ENCODE measurements at regions of chr7 and their contacts with region 1.

Region 1: DNA sequence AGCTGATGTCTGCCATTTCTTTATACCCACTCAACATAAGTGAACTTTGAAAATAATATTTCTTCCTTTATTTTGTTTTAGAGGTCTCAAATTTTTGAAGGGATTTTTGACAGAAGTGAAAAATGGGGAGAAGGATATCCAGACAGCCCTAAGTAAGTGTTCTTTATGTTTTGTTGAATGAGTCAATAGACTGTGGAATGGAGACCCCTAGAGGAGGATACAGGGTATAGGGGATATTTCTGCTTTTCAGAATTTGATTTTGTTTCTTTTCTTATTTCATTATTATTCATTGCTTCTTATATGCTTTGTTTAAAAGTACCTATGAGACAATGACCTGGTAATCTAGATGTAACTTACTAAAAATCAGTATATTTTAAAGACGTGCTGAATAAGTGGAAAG is 34.4 kb downstream of the PLEKHA8 start:
- DNase-seq: peak; percentile 46 to 51
- ATAC-seq: peak; percentile 86 to 93; a peak in 5 of 6 replicates
- H3K4me3 ChIP-seq: no peak overlapping the region
- H3K27ac ChIP-seq: no peak overlapping the region
- H3K4me1 ChIP-seq: no peaks in the 10 kb centered on the region
- CTCF ChIP-seq: peak; percentile 79
- EP300 ChIP-seq: no peak
- POLR2A ChIP-seq: no peak
- RAD21 ChIP-seq: peak; percentile 70 to 83; a peak in 4 of 5 replicates

Region 2: GRCh38 chr7:29748286-29749108 is 314.1 kb before region 1 on chr7:
- CTCF ChIA-PET with region 1: interaction called, 10 read pairs
- POLR2A ChIA-PET with region 1: no interaction called
- DNase-seq: peak; percentile 13 to 65
- ATAC-seq: peak; percentile 87 to 91
- H3K4me3 ChIP-seq: no peak overlapping the region
- H3K27ac ChIP-seq: no peak overlapping the region
- H3K4me1 ChIP-seq: no peaks in the 10 kb centered on the region
- CTCF ChIP-seq: peak; percentile 76
- EP300 ChIP-seq: no peak
- POLR2A ChIP-seq: no peak
- RAD21 ChIP-seq: peak; percentile 73

Region 3: GRCh38 chr7:29878081-29878688 is 184.4 kb before region 1 on chr7:
- CTCF ChIA-PET with region 1: interaction called, 14 read pairs
- POLR2A ChIA-PET with region 1: no interaction called
- DNase-seq: peak; percentile 39 to 46
- ATAC-seq: peak; percentile 52 to 83; a peak in 3 of 6 replicates
- H3K4me3 ChIP-seq: no peak overlapping the region
- H3K27ac ChIP-seq: no peak overlapping the region
- H3K4me1 ChIP-seq: no peaks in the 10 kb centered on the region
- CTCF ChIP-seq: peak; percentile 77
- EP300 ChIP-seq: no peak
- POLR2A ChIP-seq: no peak
- RAD21 ChIP-seq: peak; percentile 73 to 81

Region 4: GRCh38 chr7:30032310-30033130 is 30.1 kb before region 1 on chr7:
- CTCF ChIA-PET with region 1: interaction called, 15 read pairs
- POLR2A ChIA-PET with region 1: no interaction called
- DNase-seq: no peak
- ATAC-seq: no peak
- H3K4me3 ChIP-seq: no peak overlapping the region
- H3K27ac ChIP-seq: no peak overlapping the region
- H3K4me1 ChIP-seq: peaks cover 12% of the 10 kb centered on the region; the same call in 2 of the 3 replicates
- CTCF ChIP-seq: no peak
- EP300 ChIP-seq: no peak
- POLR2A ChIP-seq: no peak
- RAD21 ChIP-seq: no peak

Region 5: DNA sequence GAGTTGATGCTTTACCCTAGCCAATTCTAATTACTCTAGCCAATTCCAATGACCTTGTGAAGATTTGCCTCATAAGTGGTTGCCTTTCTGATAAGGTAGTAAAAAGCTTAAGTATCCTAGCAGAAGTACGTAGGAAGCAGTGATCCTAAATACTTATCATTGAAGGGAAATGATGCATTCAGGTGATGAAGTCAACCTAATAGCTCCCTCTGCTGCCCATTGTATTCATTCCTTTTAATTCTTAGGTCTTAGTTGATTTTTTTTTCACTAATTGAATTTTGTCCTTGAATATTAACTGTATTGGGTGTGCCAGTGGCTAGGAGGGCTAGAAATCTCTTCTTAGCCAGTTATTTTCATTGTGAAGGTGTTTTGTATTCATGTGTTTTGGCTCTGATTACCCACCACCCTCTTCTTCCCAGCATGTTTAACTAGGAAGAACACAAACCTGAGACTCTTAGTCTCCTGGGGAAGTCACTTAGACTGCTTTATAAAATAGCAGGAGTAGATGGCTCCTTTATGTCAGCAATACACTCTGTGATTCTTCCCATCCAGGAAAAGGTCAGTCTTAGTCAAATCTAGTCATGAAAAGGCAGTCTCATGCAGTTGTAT is 11.9 kb after region 1 on chr7:
- CTCF ChIA-PET with region 1: interaction called, 57 read pairs
- POLR2A ChIA-PET with region 1: no interaction called
- DNase-seq: peak in 1 of 2 experiments; percentile 49
- ATAC-seq: peak; percentile 50 to 75; a peak in 3 of 6 replicates
- H3K4me3 ChIP-seq: no peak overlapping the region
- H3K27ac ChIP-seq: no peak overlapping the region
- H3K4me1 ChIP-seq: no peaks in the 10 kb centered on the region
- CTCF ChIP-seq: peak; percentile 78
- EP300 ChIP-seq: no peak
- POLR2A ChIP-seq: no peak
- RAD21 ChIP-seq: peak; percentile 56